Naive thymus-derived CD4-positive, alpha-beta T cell (primary cell): ENCODE measurements at regions of chrX and their contacts with region 1.

Region 1: DNA sequence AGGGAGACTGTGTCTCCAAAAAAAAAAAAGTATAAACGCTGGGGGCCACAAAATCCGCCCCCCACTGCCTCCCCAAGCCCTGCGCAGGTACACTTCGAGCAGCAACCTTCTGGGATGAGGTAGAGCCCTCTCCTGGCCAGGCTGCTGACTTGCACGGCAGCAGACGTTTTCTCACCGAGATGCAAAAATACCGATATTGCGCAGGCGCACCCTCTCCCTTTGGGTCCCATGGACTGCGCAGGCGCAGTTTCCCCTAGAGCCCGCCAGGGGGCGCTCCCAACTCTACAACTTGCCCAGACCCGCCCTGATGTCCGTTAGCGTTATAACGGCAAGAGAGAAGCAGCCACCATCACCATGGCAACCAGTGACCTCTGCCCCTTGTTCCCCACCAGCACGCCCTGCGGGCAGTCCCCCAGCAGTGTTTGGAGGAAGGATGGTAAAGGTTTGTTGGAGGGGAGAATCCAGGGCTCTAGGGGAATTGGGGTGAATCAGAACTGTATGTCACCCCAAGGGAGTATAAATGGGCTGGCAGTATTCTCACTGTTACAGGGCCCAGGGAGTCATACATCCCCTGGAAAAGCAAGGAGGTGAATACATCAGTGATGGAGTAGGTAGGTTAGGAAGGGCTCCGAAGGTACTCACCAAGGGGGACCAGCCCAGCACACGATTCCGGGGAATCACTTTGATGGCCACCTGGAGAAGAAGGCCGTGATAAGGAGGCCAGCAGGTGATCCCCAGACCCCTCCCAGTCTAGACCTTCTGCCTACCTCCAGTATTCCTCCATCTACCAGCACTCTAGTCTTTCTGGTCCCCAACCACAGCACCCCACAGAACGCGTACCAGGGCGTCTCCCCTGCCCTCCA is 1.5 kb downstream of the PIM2 start:
- DNase-seq: peak; percentile 73 to 92 (median 88)
- ATAC-seq: peak; percentile 65
- H3K4me3 ChIP-seq: peak overlapping the region; percentile 75
- H3K4me3 Mint-ChIP-seq: peak overlapping the region; percentile 87 to 99 (median 96)
- H3K27ac ChIP-seq: peak overlapping the region; percentile 95
- H3K27ac Mint-ChIP-seq: peak overlapping the region; percentile 89 to 99 (median 96)
- H3K4me1 ChIP-seq: peaks cover 46 to 49% of the 10 kb centered on the region in 2 donors
- H3K4me1 Mint-ChIP-seq: peaks cover 11 to 82% (median 48%) of the 10 kb centered on the region in 7 donors
- H3K27me3 ChIP-seq: no peaks in the 10 kb centered on the region
- H3K27me3 Mint-ChIP-seq: peaks cover 0 to 5% (median 0%) of the 10 kb centered on the region in 5 donors

Region 2: DNA sequence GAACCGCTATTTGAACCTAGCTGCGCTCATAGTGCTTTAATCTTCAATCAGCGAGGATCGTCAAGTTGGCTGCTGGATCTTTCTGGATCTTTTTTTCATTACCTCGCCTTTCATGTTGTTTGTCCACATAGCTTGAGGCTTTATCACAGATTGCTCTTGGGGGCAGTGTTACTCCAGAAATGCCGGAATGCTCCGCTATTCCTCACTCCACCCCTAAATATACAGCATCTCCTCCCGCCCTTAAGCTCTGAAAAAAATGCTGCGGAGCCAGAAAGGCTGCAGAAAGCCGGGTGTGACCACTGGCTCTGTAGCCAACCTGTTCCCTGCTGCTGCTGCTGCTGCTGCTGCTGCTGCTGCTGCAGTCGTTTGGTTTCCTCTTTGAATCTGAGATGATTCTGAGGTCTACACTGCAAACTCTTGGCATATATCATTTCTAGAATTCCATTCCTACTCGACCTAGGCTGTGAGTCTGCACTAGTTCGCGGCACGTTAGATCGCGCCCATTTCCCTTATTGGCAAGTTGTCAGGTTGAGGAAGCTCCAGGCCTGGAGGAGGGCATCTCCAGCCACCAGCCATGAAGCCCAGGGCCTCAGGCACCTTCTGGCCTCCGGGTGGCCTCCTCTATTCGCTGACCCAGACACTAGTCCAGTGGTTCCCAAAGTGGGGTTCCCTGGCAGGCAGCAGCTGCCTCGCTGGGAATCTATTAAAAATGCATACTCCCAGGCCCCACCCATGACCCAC is 285.9 kb before region 1 on chrX:
- CTCF ChIA-PET with region 1: no interaction called
- POLR2A ChIA-PET with region 1: no interaction called
- intact Hi-C with region 1: loop called in 1 of 2 experiments (anchors 1 kb)
- DNase-seq: peak; percentile 13 to 74 (median 54)
- ATAC-seq: peak; percentile 88
- H3K4me3 ChIP-seq: no peak overlapping the region
- H3K4me3 Mint-ChIP-seq: peak overlapping the region in 9 of 10 donors; percentile 38 to 70 (median 57)
- H3K27ac ChIP-seq: no peak overlapping the region
- H3K27ac Mint-ChIP-seq: peak overlapping the region in 7 of 9 donors; percentile 28 to 79 (median 54)
- H3K4me1 ChIP-seq: peaks cover 7 to 14% of the 10 kb centered on the region in 2 donors
- H3K4me1 Mint-ChIP-seq: peaks cover 2 to 14% (median 7%) of the 10 kb centered on the region in 7 donors
- H3K27me3 ChIP-seq: no peaks in the 10 kb centered on the region
- H3K27me3 Mint-ChIP-seq: no peaks in the 10 kb centered on the region

Region 3: GRCh38 chrX:48854898-48855297 is 62.5 kb before region 1 on chrX:
- CTCF ChIA-PET with region 1: no interaction called
- POLR2A ChIA-PET with region 1: no interaction called
- intact Hi-C with region 1: loop called in 1 of 2 experiments (anchors 5 kb)
- DNase-seq: peak in 2 of 9 donors; percentile 16 to 17
- ATAC-seq: no peak
- H3K4me3 ChIP-seq: no peak overlapping the region
- H3K4me3 Mint-ChIP-seq: no peak overlapping the region
- H3K27ac ChIP-seq: no peak overlapping the region
- H3K27ac Mint-ChIP-seq: peak overlapping the region in 1 of 9 donors; percentile 33
- H3K4me1 ChIP-seq: no peaks in the 10 kb centered on the region
- H3K4me1 Mint-ChIP-seq: peaks cover 0 to 7% (median 6%) of the 10 kb centered on the region in 7 donors
- H3K27me3 ChIP-seq: no peaks in the 10 kb centered on the region
- H3K27me3 Mint-ChIP-seq: peaks cover 0 to 11% (median 4%) of the 10 kb centered on the region in 5 donors

Region 4: GRCh38 chrX:48937054-48937907 is 19.9 kb after region 1 on chrX:
- CTCF ChIA-PET with region 1: interaction called, 14 read pairs
- POLR2A ChIA-PET with region 1: interaction called, 432 read pairs
- intact Hi-C with region 1: loop called (anchors 1 kb)
- DNase-seq: peak; percentile 59 to 96 (median 92)
- ATAC-seq: peak; percentile 75
- H3K4me3 ChIP-seq: peak overlapping the region; percentile 70
- H3K4me3 Mint-ChIP-seq: peak overlapping the region; percentile 78 to 96 (median 88)
- H3K27ac ChIP-seq: peak overlapping the region; percentile 97
- H3K27ac Mint-ChIP-seq: peak overlapping the region; percentile 96 to 99 (median 99)
- H3K4me1 ChIP-seq: peaks cover 69 to 80% of the 10 kb centered on the region in 2 donors
- H3K4me1 Mint-ChIP-seq: peaks cover 36 to 91% (median 80%) of the 10 kb centered on the region in 7 donors
- H3K27me3 ChIP-seq: no peaks in the 10 kb centered on the region
- H3K27me3 Mint-ChIP-seq: peaks cover 0 to 3% (median 0%) of the 10 kb centered on the region in 5 donors

Region 5: DNA sequence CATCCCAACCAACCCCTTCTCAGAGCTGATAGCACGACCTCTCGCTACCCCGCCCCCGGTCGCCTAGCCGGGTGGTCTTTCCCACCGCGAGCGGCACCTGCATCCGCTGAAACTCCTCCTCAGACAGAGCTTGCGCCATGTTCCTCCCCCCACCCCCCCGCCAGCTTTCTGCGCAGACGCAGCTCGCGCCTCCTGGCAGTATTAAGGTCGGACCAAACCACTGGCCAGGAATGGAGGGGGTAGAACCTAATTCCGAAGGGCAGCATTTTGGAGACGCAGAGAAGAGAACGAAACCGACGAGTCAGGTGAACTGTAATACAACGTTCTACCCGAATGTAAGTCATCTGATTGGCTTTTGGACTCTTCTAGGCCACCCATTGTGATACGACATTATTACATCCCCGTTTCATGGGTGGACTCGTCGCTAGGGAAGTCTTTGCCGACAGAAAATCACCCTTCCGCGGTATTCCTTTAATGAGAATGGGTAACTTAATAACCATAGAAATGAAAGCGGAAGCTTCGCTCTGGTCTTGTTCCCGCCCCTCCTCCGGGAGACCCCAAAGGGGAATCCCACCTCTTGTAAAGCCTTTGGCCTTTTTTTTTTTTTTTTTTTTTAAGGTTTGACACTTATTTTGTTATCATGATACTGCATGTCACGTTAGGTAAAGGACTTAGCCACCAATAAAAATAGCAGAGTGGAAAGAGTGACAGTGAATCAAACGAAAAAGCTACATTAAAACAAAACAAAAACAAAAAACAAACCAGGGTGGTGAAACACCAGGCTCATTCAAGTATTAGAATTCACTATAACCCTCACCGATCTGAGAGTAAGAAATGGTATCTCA is 84.9 kb after region 1 on chrX and contains the start of gene GRIPAP1:
- CTCF ChIA-PET with region 1: no interaction called
- POLR2A ChIA-PET with region 1: no interaction called
- intact Hi-C with region 1: loop called (anchors 1 to 2 kb)
- DNase-seq: peak; percentile 61 to 87 (median 79)
- ATAC-seq: peak; percentile 88
- H3K4me3 ChIP-seq: peak within 1 kb of the TSS; percentile 97
- H3K4me3 Mint-ChIP-seq: peak within 1 kb of the TSS; percentile 94 to 99 (median 98)
- H3K27ac ChIP-seq: peak within 1 kb of the TSS; percentile 97
- H3K27ac Mint-ChIP-seq: peak within 1 kb of the TSS; percentile 92 to 100 (median 98)
- H3K4me1 ChIP-seq: peaks cover 9 to 10% of the 10 kb centered on the region in 2 donors
- H3K4me1 Mint-ChIP-seq: peaks cover 7 to 43% (median 32%) of the 10 kb centered on the region in 7 donors
- H3K27me3 ChIP-seq: no peaks in the 10 kb centered on the region
- H3K27me3 Mint-ChIP-seq: no peaks in the 10 kb centered on the region
- total RNA-seq, gene GRIPAP1: 103 to 108 (median 105) TPM